Testis (tissue), 5 donors: ENCODE measurements at regions of chr18 and their contacts with region 1.

Region 1: DNA sequence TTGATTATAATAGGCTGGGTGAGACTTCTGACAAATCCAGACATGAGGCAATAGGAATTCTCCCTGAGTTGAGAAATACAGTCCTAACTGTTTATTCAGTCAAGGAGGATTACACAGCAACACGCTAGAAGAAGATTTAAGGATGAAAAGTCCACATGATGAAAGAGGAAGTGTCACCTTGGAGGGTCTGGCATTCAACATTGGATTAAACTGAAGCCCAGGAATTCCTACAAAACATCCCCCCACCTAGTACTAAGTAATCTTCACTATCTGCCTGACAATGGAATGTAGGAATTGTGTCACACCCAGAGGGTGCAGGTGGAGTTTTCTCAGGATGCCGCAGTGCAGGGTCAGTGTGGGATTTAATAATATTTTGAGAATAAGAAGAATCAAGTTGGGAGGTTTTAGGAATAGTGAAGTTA is 142.4 kb downstream of the SOCS6 start:
- DNase-seq: no peak
- H3K4me3 ChIP-seq: no peak overlapping the region
- H3K27ac ChIP-seq: no peak overlapping the region
- H3K4me1 ChIP-seq: no peaks in the 10 kb centered on the region
- H3K27me3 ChIP-seq: no peaks in the 10 kb centered on the region
- CTCF ChIP-seq: no peak
- POLR2A ChIP-seq: no peak

Region 2: GRCh38 chr18:70195852-70196434 is 235.3 kb before region 1 on chr18:
- intact Hi-C with region 1: loop called (anchors 10 kb)
- DNase-seq: peak; percentile 50
- H3K4me3 ChIP-seq: no peak overlapping the region
- H3K27ac ChIP-seq: no peak overlapping the region
- H3K4me1 ChIP-seq: no peaks in the 10 kb centered on the region
- H3K27me3 ChIP-seq: no peaks in the 10 kb centered on the region
- CTCF ChIP-seq: peak; percentile 67 to 77 (median 73)
- POLR2A ChIP-seq: no peak